GM10248 (cell line): ENCODE measurements at regions of chr5 and their contacts with region 1.

Region 1: DNA sequence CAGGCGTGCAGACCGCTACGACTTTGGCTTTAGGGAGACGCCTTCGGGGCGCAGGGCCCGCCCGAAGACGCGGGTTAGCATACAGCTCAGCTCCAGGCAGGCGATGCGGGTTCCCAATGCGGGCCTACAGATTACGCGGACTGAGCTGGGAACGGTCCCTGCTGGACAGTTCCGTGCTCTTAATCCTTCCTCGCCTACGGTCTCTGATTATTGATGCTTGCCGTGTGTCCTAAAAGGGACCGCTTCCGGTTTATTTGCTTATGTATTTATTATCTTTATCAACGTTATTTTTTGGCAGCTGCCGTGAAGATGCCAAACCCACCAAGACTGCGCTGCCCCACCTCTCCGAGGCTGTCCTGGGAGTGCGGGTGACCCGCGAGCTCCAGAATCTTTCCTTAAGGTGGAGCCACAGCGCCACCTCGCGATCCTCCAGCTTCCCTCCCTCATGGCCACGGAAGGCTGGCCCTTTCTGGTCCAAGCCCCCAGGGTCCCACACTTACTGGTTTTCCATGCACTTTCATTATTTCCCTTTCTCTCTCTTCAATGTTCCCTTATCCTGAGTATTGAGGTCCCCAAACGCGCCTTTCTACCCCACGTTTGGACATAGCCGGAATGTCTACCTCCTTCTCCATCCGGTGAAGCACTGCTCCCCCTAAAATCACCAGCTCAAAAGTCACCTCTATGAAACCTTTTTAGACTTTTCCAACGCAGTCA is 7.0 kb upstream of the EBF1 start:
- DNase-seq: peak; percentile 80
- CTCF ChIP-seq: peak; percentile 92

Region 2: DNA sequence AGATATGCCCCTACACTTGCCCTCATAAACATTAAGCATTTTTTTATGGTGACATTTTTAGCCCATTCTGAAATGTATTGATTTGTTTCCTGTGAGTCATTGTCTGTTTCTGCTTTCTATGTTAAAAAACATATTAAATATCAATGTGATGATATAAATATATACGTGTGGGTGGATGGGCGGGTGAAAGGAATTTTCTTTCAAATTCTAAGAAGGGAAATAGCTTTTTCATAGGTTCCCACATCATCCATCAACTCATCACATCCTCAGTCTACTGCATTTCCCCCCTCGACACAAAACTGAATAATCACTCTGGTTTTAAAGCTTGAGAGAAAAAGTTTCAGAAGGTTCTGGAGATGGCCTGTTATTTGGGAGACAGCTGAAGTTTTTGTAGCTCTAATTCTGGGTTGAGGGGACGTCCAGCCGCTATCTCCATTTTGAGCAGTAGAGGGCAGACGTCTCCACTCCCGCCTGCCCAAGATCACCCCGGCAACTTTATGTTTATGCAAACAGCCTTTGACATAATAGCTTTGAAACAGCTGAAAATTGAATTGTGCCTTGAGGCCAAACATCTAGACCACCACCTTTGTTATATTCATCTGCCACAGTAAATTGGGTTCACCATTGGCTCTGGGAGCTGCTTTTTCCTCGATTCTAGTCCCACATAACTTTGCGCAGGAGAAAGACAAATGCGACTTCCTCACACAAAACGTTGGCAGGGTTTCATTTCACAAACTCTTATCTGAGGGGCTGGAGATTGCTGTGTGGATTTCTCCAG is 1031.5 kb before region 1 on chr5:
- CTCF ChIA-PET with region 1: interaction called, 22 read pairs
- POLR2A ChIA-PET with region 1: no interaction called
- DNase-seq: peak; percentile 52
- CTCF ChIP-seq: peak; percentile 81

Region 3: DNA sequence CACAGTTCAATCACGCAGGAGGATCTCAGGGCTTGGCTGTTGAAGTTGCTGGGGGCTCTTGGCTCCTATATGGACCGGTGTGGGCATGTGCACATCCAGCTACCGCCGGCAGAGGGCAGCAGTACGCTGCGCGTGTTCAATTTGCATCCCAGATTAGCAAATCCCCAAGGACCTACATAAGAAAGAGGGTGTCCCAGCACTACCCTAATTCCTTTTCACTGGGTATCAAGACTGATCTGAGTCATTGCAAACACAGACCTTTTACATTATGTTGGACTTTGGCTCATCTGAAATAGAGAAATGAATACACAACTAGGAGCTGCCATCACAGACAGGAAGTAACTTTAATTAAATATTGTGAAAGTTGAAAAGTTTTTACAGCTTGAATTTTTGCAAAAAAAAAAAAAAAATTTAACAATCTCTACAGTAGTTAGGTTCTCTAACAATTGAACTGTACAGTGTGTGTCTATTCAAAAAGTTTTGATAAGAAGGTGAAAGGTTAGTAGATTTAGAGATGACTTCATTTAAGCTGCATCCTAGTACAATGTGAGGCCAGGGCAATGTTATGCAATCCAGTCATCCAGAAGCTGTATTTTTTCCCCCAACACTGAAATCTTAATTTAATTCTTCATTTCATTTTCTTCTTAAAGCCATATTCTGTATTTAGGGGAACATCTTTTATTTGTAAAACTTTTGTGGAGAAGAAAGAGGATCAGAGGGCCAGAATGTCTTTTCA is 411.0 kb before region 1 on chr5:
- CTCF ChIA-PET with region 1: interaction called, 255 read pairs
- POLR2A ChIA-PET with region 1: interaction called, 3 read pairs
- DNase-seq: peak; percentile 72
- CTCF ChIP-seq: peak; percentile 97

Region 4: GRCh38 chr5:158770506-158770905 is 336.2 kb before region 1 on chr5:
- CTCF ChIA-PET with region 1: interaction called, 10 read pairs
- POLR2A ChIA-PET with region 1: no interaction called
- DNase-seq: peak; percentile 8
- CTCF ChIP-seq: peak; percentile 23

Region 5: GRCh38 chr5:158910782-158911692 is 195.7 kb before region 1 on chr5:
- CTCF ChIA-PET with region 1: interaction called, 10 read pairs
- POLR2A ChIA-PET with region 1: no interaction called
- DNase-seq: peak; percentile 13
- CTCF ChIP-seq: no peak

Region 6: GRCh38 chr5:159094745-159095144 is 12.0 kb before region 1 on chr5:
- CTCF ChIA-PET with region 1: interaction called, 17 read pairs
- POLR2A ChIA-PET with region 1: no interaction called
- DNase-seq: no peak
- CTCF ChIP-seq: no peak

Region 7: GRCh38 chr5:159133041-159133741 is 26.5 kb after region 1 on chr5:
- CTCF ChIA-PET with region 1: interaction called, 18 read pairs
- POLR2A ChIA-PET with region 1: no interaction called
- DNase-seq: peak; percentile 41
- CTCF ChIP-seq: peak; percentile 60

Region 8: GRCh38 chr5:159187719-159188118 is 81.0 kb after region 1 on chr5:
- CTCF ChIA-PET with region 1: no interaction called
- POLR2A ChIA-PET with region 1: no interaction called
- DNase-seq: no peak
- CTCF ChIP-seq: no peak

Region 9: DNA sequence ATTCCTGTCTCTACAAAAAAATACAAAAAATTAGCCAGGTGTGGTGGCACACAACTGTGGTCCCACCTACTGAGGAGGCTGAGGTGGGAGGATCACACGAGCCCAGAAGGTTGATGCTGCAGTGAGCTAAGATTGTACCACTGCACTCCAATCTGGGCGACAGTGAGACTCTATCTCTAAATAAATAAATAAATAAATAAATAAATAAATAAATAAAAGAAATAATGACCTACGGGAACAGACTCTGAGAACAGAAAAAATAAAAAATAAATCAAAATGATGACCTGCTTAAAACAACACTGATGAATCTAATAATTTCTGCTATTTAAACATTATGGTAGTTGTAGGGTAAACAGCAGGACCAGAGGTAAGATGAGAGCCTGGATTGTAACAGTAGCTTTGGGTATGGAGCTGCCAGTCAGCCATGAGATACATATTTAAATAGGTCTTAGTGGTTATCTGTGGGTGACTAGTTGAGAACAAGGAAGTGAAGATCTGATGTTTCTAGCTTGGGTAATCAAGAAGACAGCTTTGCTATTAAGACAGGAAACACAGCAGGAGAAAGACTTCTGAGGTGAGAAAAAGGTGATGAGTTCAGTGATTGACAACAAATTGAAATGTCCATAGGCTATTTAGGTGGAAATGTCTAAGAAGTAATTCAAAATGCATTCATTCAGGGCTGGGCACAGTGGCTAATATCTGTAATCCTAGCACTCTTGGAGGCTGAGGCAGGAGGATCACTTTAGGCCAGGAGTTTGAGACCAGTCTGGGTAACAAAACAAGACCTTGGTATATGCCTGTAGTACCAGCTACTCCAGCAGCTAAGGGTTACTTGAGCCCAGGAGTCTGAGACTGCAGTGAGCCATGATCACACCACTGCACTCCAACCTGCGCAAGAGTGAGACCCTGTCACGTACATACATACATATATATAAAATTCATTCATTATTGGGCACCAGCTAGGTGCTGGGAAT is 91.6 kb after region 1 on chr5:
- CTCF ChIA-PET with region 1: no interaction called
- POLR2A ChIA-PET with region 1: no interaction called
- DNase-seq: peak; percentile 72
- CTCF ChIP-seq: no peak